ENCODE measurements at regions of chr11 and their contacts with region 1.

Region 1: GRCh38 chr11:58061813-58062212 is 31.1 kb downstream of the OR6Q1 start:
- DNase-seq: no peak
- H3K4me3 ChIP-seq: no peak overlapping the region
- H3K4me3 Mint-ChIP-seq: no peak overlapping the region
- H3K27ac Mint-ChIP-seq: no peak overlapping the region
- H3K4me1 ChIP-seq: peaks cover 33% of the 10 kb centered on the region
- H3K4me1 Mint-ChIP-seq: peaks cover 17% of the 10 kb centered on the region
- H3K27me3 ChIP-seq: no peaks in the 10 kb centered on the region
- H3K27me3 Mint-ChIP-seq: no peaks in the 10 kb centered on the region
- CTCF ChIP-seq: no peak

Region 2: DNA sequence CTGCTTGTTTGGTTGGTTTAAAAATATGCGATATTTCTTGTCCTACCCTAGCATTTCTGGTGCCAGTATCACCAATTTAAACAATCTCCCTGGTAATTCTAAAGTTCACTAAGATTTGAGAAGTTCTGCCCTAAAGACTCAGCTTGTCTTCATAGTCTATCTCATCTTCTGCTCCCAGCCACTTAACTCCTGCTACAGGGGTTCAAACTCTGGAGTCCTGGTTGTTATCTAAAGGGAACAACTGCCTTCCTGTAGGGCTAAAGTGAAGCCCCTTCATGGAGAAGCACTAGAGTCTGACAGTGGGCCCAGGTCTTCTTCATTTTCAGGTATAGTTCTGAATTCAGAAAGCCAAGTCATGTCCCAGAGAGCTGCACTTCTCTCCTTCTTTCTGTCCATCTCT is 227.0 kb before region 1 on chr11:
- CTCF ChIA-PET with region 1: no interaction called
- POLR2A ChIA-PET with region 1: no interaction called
- intact Hi-C with region 1: loop called (anchors 5 kb)
- DNase-seq: no peak
- H3K4me3 ChIP-seq: no peak overlapping the region
- H3K4me3 Mint-ChIP-seq: no peak overlapping the region
- H3K27ac Mint-ChIP-seq: no peak overlapping the region
- H3K4me1 ChIP-seq: no peaks in the 10 kb centered on the region
- H3K4me1 Mint-ChIP-seq: no peaks in the 10 kb centered on the region
- H3K27me3 ChIP-seq: no peaks in the 10 kb centered on the region
- H3K27me3 Mint-ChIP-seq: peaks cover 3% of the 10 kb centered on the region
- CTCF ChIP-seq: no peak

Region 3: DNA sequence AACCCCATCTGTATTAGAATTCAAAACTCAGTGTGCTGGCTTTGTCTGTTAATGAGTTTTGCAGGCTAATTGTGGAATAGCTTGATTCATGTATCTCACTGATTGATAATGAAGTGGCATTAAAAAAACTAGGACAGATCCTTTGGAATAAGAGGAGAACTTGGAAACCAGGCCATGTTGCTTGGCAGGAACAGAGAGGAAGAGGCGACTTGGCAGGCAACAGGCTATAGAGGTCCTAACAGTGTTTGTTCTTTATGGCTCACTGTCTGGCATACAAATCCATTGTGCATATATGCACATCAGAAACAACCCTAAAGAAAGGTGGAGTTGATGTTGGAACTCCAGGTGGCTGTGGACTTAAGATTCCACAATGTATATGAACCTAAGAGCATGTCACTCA is 80.9 kb after region 1 on chr11:
- CTCF ChIA-PET with region 1: no interaction called
- POLR2A ChIA-PET with region 1: no interaction called
- intact Hi-C with region 1: no loop called
- DNase-seq: no peak
- H3K4me3 ChIP-seq: no peak overlapping the region
- H3K4me3 Mint-ChIP-seq: no peak overlapping the region
- H3K27ac Mint-ChIP-seq: no peak overlapping the region
- H3K4me1 ChIP-seq: no peaks in the 10 kb centered on the region
- H3K4me1 Mint-ChIP-seq: no peaks in the 10 kb centered on the region
- H3K27me3 ChIP-seq: no peaks in the 10 kb centered on the region
- H3K27me3 Mint-ChIP-seq: no peaks in the 10 kb centered on the region
- CTCF ChIP-seq: no peak

Region 4: DNA sequence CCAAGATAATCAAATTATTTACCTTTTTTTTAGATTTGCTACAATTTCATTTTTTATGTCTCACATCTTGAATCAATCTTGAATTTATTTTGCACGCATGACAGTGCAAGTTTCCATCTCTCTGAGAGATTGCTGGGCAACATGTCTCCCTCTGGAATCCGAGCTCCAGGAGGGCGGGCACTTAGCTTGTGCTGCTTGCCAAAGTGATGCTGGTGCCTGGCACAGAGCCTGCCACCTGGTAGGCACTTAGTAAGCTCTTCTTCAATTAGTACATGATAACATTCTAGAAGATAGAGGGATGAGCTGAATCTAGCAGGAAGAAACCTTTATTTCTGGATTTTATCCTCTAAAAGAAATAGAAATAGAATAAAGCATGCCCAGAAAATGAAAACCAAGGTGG is 91.0 kb after region 1 on chr11:
- CTCF ChIA-PET with region 1: no interaction called
- POLR2A ChIA-PET with region 1: no interaction called
- intact Hi-C with region 1: no loop called
- DNase-seq: no peak
- H3K4me3 ChIP-seq: no peak overlapping the region
- H3K4me3 Mint-ChIP-seq: no peak overlapping the region
- H3K27ac Mint-ChIP-seq: no peak overlapping the region
- H3K4me1 ChIP-seq: no peaks in the 10 kb centered on the region
- H3K4me1 Mint-ChIP-seq: no peaks in the 10 kb centered on the region
- H3K27me3 ChIP-seq: no peaks in the 10 kb centered on the region
- H3K27me3 Mint-ChIP-seq: no peaks in the 10 kb centered on the region
- CTCF ChIP-seq: no peak

Region 5: GRCh38 chr11:58165504-58166106 is 103.8 kb after region 1 on chr11:
- CTCF ChIA-PET with region 1: no interaction called
- POLR2A ChIA-PET with region 1: no interaction called
- intact Hi-C with region 1: loop called (anchors 5 kb)
- DNase-seq: peak; percentile 70 to 79
- H3K4me3 ChIP-seq: no peak overlapping the region
- H3K4me3 Mint-ChIP-seq: peak overlapping the region; percentile 47
- H3K27ac Mint-ChIP-seq: peak overlapping the region; percentile 79
- H3K4me1 ChIP-seq: peaks cover 38% of the 10 kb centered on the region
- H3K4me1 Mint-ChIP-seq: peaks cover 36% of the 10 kb centered on the region
- H3K27me3 ChIP-seq: no peaks in the 10 kb centered on the region
- H3K27me3 Mint-ChIP-seq: no peaks in the 10 kb centered on the region
- CTCF ChIP-seq: no peak

Measured in Caco-2 (cell line).